Activated CD4-positive, alpha-beta T cell treated with anti-CD3 and anti-CD28 coated beads, Interleukin-2, amount 10 ng/mL, durations not matched to agents 7 days and 5 days (primary cell): ENCODE measurements at regions of chr1 and their contacts with region 1.

Region 1: GRCh38 chr1:32040711-32041110 is 27.0 kb downstream of the KHDRBS1 start:
- DNase-seq: no peak
- H3K4me3 Mint-ChIP-seq: no peak overlapping the region
- H3K27ac Mint-ChIP-seq: no peak overlapping the region
- H3K4me1 Mint-ChIP-seq: peaks cover 2% of the 10 kb centered on the region
- H3K27me3 Mint-ChIP-seq: no peaks in the 10 kb centered on the region

Region 2: DNA sequence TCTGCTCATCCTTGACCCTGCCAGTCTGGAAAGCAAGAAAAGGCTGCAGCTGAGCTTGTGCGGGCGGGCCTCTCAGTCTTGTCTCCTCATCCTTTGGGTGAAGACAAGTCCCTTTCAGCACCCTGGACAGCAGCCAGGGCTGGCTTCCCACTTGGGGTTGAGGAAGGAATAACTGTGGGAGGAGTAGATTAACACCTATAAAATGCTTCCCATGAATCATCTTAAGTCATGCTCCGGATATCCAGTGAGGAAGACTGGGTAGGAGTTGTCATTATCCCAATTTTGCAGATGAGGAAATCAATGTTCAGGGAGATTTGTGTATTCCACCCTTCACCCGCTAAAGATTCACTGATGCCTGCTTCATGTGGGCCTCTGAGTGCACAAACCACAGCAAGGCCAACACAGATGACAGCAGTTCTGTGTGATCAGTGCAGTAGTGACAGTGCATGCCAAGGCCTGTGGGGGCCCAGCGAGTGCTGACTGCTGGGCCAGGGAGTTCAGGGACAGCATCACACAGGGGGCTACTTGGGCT is 316.8 kb before region 1 on chr1:
- CTCF ChIA-PET with region 1: no interaction called
- POLR2A ChIA-PET with region 1: no interaction called
- DNase-seq: peak; percentile 73
- H3K4me3 Mint-ChIP-seq: no peak overlapping the region
- H3K27ac Mint-ChIP-seq: no peak overlapping the region
- H3K4me1 Mint-ChIP-seq: no peaks in the 10 kb centered on the region
- H3K27me3 Mint-ChIP-seq: peaks cover 7% of the 10 kb centered on the region

Region 3: DNA sequence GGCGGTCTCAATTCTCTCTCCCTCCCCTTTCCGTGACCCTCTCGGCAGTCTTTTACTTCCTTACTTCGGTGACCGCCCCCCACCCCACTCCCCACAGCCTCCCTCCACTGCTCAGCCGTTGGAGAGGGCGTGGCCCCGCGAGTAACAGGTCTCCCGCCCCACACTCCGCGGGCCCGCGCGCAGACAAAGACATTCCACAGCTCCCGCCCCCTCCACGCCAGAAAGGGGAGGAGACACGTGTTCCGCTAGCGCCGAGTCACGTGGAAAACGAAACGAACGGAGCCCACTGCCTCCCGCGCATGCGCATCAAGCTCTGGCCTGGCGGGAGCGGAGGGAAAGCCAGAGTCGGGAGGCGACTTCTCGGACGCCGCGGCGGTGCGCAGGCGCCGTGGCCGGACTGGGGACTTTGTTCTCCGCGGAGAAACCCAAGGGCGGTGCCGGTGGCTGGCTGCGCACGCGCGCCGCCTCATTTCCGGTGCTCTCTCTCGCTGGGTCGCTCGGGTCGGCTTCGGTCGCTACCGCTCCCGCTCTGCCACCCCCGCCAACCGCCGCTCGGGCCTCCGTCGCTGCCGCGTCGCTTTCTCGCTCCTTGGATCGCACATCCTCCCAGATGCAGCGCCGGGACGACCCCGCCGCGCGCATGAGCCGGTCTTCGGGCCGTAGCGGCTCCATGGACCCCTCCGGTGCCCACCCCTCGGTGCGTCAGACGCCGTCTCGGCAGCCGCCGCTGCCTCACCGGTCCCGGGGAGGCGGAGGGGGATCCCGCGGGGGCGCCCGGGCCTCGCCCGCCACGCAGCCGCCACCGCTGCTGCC is 27.1 kb before region 1 on chr1 and contains the start of gene KHDRBS1:
- CTCF ChIA-PET with region 1: no interaction called
- POLR2A ChIA-PET with region 1: no interaction called
- DNase-seq: peak; percentile 99
- H3K4me3 Mint-ChIP-seq: peak within 1 kb of the TSS; percentile 95
- H3K27ac Mint-ChIP-seq: peak within 1 kb of the TSS; percentile 95
- H3K4me1 Mint-ChIP-seq: peaks cover 37% of the 10 kb centered on the region
- H3K27me3 Mint-ChIP-seq: no peaks in the 10 kb centered on the region
- total RNA-seq, gene KHDRBS1: 174 to 183 TPM

Region 4: GRCh38 chr1:32052887-32053286 is 12.2 kb after region 1 on chr1:
- CTCF ChIA-PET with region 1: interaction called, 15 read pairs
- POLR2A ChIA-PET with region 1: no interaction called
- DNase-seq: no peak
- H3K4me3 Mint-ChIP-seq: no peak overlapping the region
- H3K27ac Mint-ChIP-seq: no peak overlapping the region
- H3K4me1 Mint-ChIP-seq: no peaks in the 10 kb centered on the region
- H3K27me3 Mint-ChIP-seq: no peaks in the 10 kb centered on the region

Region 5: DNA sequence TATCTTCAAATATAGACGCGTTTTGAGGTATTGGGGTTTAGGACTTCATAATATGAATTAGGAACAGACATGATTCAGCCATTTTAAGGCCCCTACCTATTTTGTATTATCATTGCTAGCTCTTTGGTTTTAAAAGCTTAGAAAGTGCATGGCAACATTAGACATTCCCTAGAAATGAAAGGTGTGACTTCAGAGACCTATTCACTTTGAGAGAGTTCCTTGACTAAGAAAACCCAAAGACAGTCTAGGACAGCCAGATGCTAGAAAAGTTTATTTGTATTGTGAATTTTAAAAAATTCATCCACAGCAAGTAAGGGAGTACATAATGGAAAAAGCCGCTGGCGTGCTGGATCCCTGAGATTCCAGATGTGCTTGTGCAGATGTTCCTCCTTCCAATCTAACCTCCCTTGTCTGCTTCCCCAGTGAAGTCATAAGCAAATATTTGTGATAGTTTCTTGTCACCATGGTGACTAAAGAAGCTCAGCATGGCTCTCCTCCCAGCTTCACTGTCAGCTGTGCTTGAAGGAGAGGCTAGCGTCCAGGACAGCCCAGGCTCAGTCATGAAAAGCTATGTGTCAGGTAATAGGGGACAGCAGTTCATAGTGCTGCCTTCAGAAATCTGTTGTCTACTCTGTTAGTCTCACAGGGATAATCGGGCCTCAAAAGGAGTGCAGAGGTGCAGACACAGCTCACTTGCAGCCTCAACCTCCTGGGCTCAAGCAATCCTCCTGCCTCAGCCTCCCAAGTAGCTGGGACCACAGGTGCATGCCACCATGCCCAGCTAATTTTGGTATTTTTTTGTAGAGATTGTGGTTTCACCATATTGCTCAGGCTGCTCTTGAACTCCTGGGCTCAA is 102.0 kb after region 1 on chr1:
- CTCF ChIA-PET with region 1: no interaction called
- POLR2A ChIA-PET with region 1: interaction called, 10 read pairs
- DNase-seq: no peak
- H3K4me3 Mint-ChIP-seq: no peak overlapping the region
- H3K27ac Mint-ChIP-seq: no peak overlapping the region
- H3K4me1 Mint-ChIP-seq: peaks cover 44% of the 10 kb centered on the region
- H3K27me3 Mint-ChIP-seq: no peaks in the 10 kb centered on the region